Activated T-helper 1 cell treated with anti-CD3 and anti-CD28 coated beads, Interleukin-12 subunit alpha, Interleukin-12 subunit beta, Interleukin-2, Interleukin-4 antibody, amounts not matched to agents 30 ng/mL and 10 ng/mL and 1 ng/mL, durations not matched to agents 14 hours and 24 hours and 36 hours (primary cell): ENCODE measurements at regions of chr16 and their contacts with region 1.

Region 1: GRCh38 chr16:19114352-19115052 is 738 bp downstream of the ITPRIPL2 start:
- DNase-seq: no peak
- H3K4me3 Mint-ChIP-seq: peak overlapping the region; percentile 82
- H3K27ac Mint-ChIP-seq: peak overlapping the region; percentile 75
- H3K4me1 Mint-ChIP-seq: peaks cover 37% of the 10 kb centered on the region
- H3K27me3 Mint-ChIP-seq: peaks cover 19% of the 10 kb centered on the region

Region 2: GRCh38 chr16:18789850-18790724 is 324.4 kb before region 1 on chr16 and contains the start of gene RPS15A:
- intact Hi-C with region 1: loop called (anchors 5 kb)
- DNase-seq: peak; percentile 92
- H3K4me3 Mint-ChIP-seq: peak within 1 kb of the TSS; percentile 95
- H3K27ac Mint-ChIP-seq: peak within 1 kb of the TSS; percentile 85
- H3K4me1 Mint-ChIP-seq: peaks cover 64% of the 10 kb centered on the region
- H3K27me3 Mint-ChIP-seq: peaks cover 1% of the 10 kb centered on the region
- total RNA-seq, gene RPS15A: 1,849 and 1,857 TPM in 2 replicates

Region 3: GRCh38 chr16:19086322-19087199 is 27.9 kb before region 1 on chr16:
- intact Hi-C with region 1: loop called (anchors 1 kb)
- DNase-seq: peak; percentile 75
- H3K4me3 Mint-ChIP-seq: peak overlapping the region; percentile 54
- H3K27ac Mint-ChIP-seq: no peak overlapping the region
- H3K4me1 Mint-ChIP-seq: no peaks in the 10 kb centered on the region
- H3K27me3 Mint-ChIP-seq: peaks cover 7% of the 10 kb centered on the region

Region 4: DNA sequence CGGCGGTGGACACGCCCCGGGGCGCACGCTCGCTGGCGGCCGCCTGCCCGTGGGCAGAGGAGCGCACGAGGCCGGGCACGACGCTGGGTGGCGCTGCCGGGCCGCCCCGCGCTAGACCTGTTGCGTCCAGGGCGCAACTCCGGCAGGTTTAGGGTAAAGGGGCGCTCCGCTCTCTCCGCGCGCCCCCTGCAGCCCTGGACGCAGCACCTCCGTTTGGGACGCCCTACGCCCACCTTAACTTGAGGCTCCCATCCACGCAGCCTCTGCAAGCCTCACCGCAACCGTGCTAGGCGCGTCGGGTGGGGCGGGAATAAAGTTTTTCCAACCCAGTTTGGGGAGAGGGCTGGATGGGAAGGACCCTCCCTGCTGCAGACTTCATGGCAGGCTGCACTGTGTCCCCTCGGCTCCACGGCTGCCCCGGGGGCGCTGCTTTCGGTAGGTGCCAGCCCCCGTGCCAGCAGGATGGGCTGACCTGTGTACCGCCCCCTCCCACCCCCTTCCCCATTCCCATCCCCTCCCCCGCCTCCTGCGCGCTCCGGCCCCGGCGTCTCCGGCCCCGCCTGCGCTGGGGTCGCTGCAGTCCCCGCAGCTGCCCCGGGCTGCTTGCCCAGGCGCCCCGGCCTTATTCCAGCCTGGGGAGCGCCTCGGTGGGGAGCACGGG is 53.3 kb after region 1 on chr16 and contains the start of gene SYT17:
- intact Hi-C with region 1: loop called (anchors 5 kb)
- DNase-seq: peak; percentile 14
- H3K4me3 Mint-ChIP-seq: no peak within 1 kb of the TSS
- H3K27ac Mint-ChIP-seq: no peak within 1 kb of the TSS
- H3K4me1 Mint-ChIP-seq: no peaks in the 10 kb centered on the region
- H3K27me3 Mint-ChIP-seq: peaks cover 39% of the 10 kb centered on the region
- total RNA-seq, gene SYT17: 0.37 and 0.54 TPM in 2 replicates

Region 5: DNA sequence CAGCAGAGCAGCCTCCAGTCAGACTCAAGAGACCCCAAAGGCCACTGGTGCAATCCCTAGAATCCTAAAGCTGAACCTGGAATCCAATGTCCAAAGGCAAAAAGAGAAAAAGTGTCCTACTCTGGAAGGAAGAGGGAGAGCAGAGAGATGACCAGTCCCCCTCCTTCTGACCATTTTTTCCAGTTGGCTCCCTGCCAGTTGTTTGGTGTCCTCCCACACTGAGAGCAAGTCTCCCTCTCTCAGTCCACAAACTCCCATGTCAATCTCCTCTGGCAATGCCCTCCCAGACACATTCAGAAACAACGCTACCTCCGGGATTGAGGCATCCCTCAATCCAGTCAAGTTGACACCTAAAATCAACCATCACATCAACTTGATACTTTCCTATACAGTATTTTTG is 166.7 kb after region 1 on chr16:
- intact Hi-C with region 1: no loop called
- DNase-seq: no peak
- H3K4me3 Mint-ChIP-seq: no peak overlapping the region
- H3K27ac Mint-ChIP-seq: no peak overlapping the region
- H3K4me1 Mint-ChIP-seq: no peaks in the 10 kb centered on the region
- H3K27me3 Mint-ChIP-seq: no peaks in the 10 kb centered on the region

Region 6: DNA sequence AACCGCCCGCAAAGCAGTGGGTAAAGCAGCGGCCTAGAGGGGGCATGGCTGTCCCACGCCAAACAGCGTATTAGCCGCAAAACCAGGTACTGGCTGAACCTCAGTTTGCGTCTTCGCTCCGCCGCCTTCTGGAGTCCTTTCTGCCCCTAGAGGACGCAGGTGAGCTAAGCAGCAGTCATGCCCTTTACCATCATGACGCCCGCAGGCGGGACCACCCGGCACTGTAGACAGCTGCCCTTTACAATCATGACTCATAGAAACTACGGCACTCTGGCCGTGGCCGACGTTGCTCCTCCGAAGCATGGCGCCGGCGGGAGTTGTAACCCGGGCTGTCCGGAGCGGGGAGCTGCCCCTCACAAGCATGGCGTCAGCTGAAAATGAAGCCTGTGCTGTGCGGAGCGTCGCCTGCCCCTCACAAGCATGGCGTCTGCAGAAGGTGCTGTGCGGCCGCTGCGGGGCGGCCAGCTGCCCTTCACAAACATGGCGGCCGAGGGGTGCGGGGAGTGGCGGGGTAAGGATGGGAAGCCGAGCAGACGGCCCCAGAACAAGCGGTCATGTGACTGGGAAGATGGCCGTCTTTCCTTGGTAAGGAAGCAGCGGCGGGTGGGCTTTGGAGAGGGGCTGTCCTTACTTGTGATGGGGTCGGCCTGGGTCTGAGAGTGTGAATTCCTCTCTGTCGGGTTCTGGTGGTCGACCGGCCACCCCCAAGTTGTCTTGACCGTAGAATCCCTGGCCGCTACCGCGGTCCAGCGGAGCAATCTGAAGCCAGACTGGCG is 440.8 kb after region 1 on chr16 and contains the start of gene VPS35L:
- intact Hi-C with region 1: loop called (anchors 5 kb)
- DNase-seq: peak; percentile 93
- H3K4me3 Mint-ChIP-seq: peak within 1 kb of the TSS; percentile 93
- H3K27ac Mint-ChIP-seq: peak within 1 kb of the TSS; percentile 93
- H3K4me1 Mint-ChIP-seq: peaks cover 14% of the 10 kb centered on the region
- H3K27me3 Mint-ChIP-seq: no peaks in the 10 kb centered on the region
- total RNA-seq, gene VPS35L: 36.2 and 37.4 TPM in 2 replicates